HCT116 (cell line): ENCODE measurements at regions of chr6 and their contacts with region 1.

Region 1: GRCh38 chr6:30828027-30828960 is 56.0 kb upstream of the DDR1 start:
- DNase-seq: no peak
- ATAC-seq: peak; percentile 87
- H3K4me3 ChIP-seq: no peak overlapping the region
- H3K27ac ChIP-seq: peak overlapping the region; percentile 22
- H3K4me1 ChIP-seq: peaks cover 23 to 47% of the 10 kb centered on the region in 2 experiments
- H3K27me3 ChIP-seq: no peaks in the 10 kb centered on the region
- CTCF ChIP-seq: peak; percentile 91 to 96 (median 95)
- POLR2A ChIP-seq: no peak
- RAD21 ChIP-seq: peak; percentile 99

Region 2: DNA sequence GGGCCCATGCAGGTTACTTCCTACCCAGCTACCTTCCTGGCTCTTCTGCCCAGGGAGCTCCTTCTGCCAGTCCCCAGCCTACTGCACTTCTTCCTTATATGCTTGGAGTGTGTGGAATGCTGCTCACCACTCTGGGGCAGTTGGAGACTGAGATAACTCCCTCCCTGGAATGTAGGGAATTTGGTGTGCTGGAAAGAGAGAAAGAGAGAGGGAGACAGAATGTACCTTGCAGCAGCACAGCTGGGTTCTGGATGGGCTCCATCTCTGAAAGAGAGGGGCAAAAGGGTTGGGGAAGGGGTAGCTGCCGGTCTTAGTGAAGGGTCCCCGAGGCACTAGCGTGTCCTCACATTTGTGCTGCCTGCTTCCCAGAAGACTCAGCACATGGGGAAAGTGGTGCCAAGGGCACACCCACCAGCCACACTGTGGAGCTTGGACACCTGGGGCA is 15.8 kb after region 1 on chr6:
- CTCF ChIA-PET with region 1: interaction called, 11 read pairs
- POLR2A ChIA-PET with region 1: no interaction called
- RAD21 ChIA-PET with region 1: no interaction called
- intact Hi-C with region 1: no loop called
- DNase-seq: no peak
- ATAC-seq: peak; percentile 75
- H3K4me3 ChIP-seq: peak overlapping the region in 1 of 2 experiments; percentile 36; a peak in 2 of 4 replicates
- H3K27ac ChIP-seq: peak overlapping the region; percentile 35
- H3K4me1 ChIP-seq: peaks cover 43 to 58% of the 10 kb centered on the region in 2 experiments
- H3K27me3 ChIP-seq: no peaks in the 10 kb centered on the region
- CTCF ChIP-seq: no peak
- POLR2A ChIP-seq: no peak
- RAD21 ChIP-seq: peak; percentile 20; the same call in 1 of the 2 replicates

Region 3: DNA sequence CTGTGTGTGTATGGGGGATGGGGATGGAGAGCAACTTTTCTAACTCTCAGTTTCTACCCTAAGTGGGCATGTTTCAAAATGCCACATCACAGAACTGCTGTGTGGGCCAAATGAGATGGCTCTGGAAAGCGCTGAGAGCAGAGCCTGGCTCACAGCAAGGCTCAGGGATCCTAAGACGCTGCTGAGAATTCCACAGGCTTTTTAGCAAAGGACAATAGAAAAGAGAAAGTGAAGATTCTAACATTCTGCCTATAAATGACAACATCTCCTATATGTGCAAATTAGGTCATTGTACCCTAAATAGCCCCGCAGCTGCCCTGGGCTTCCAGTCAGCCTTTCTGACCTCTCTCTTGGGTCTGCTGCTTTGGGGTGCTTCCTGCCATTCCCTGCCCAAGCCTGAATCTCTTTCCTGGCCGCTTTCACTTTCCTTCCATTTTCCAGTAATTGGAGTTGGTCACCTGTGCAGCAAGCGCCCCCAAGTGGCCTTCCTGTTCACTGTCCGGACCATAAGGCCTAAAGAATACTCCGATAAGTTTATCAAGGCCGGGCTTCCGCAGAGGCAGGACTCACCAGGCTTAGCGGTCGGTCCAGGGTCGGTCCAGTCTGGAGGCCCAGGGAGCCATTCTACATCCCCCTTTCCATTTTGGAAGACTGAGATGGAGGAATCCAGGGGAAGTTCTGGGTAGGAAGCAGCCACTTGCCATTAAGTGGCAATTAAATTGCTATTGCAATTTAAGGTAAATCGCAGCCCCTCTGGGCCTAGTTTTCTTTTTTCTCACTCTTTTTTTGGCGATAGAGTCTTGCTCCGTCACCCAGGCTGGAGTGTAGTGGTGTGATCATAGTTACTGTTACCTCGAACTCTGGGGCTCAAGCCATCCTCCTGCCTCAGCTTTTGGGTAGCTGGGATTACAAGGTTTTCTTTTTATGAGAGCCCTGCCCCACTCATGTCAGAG is 49.4 kb after region 1 on chr6:
- CTCF ChIA-PET with region 1: interaction called, 34 read pairs
- POLR2A ChIA-PET with region 1: interaction called, 4 read pairs
- RAD21 ChIA-PET with region 1: interaction called, 3 read pairs
- intact Hi-C with region 1: loop called (anchors 1 kb)
- DNase-seq: peak; percentile 77
- ATAC-seq: peak; percentile 82
- H3K4me3 ChIP-seq: peak overlapping the region; percentile 26 to 41
- H3K27ac ChIP-seq: peak overlapping the region; percentile 44
- H3K4me1 ChIP-seq: peaks cover 39 to 56% of the 10 kb centered on the region in 2 experiments
- H3K27me3 ChIP-seq: no peaks in the 10 kb centered on the region
- CTCF ChIP-seq: peak in 2 of 3 experiments; percentile 92 to 95; a peak in 4 of 6 replicates
- POLR2A ChIP-seq: no peak
- RAD21 ChIP-seq: no peak

Region 4: DNA sequence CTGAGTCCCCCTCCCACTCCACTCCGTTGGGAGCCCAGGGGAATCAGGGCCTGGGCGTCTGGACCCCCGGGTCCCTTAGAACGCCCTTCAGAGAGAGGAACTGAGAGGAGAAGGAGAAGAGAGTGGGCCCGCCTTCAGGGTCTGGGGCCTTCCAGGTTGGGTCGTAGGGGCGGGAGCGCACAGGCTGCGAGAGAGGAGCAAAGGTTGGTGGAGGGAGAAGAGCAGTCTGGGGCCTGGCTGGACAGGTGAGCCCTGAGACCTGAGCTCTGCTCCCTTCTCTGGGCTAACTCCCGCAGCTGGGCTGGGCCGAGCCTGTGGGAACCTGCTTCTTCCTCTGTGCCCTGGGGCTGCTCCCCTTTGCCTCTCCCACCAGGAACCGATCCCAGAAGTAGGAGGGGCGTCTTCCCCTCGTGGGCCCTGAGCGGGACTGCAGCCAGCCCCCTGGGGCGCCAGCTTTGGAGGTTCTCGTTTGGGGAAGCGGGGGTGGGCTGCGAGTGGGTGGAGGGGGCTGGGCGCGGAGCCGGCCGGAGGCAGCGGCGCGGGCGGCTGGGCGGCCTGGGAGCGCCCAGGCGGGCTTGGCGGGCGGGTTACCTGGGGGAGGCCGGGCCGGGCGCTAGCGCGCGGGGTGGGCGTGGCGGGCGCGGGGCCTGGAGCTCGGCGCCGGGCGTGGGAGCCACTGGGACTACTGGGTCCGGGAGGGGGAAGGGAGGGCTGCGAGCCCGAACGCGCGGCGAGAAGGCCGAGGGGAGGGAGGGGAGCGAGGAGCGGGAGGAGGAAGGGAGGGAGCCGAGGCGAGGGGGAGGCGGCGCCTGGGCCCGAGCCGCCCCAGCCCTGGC is 55.6 kb after region 1 on chr6 and contains the start of gene DDR1:
- CTCF ChIA-PET with region 1: interaction called, 34 read pairs
- POLR2A ChIA-PET with region 1: interaction called, 4 read pairs
- RAD21 ChIA-PET with region 1: interaction called in 1 of 2 experiments, 3 read pairs
- intact Hi-C with region 1: no loop called
- DNase-seq: no peak
- ATAC-seq: peak; percentile 30
- H3K4me3 ChIP-seq: peak within 1 kb of the TSS; percentile 83 to 87
- H3K27ac ChIP-seq: peak within 1 kb of the TSS; percentile 99
- H3K4me1 ChIP-seq: peaks cover 50 to 65% of the 10 kb centered on the region in 2 experiments
- H3K27me3 ChIP-seq: no peaks in the 10 kb centered on the region
- CTCF ChIP-seq: no peak
- POLR2A ChIP-seq: no peak
- RAD21 ChIP-seq: no peak
- total RNA-seq, gene DDR1: 211 TPM

Region 5: GRCh38 chr6:31068669-31069340 is 240.5 kb after region 1 on chr6:
- CTCF ChIA-PET with region 1: interaction called, 26 read pairs
- POLR2A ChIA-PET with region 1: interaction called, 4 read pairs
- RAD21 ChIA-PET with region 1: interaction called in 1 of 2 experiments, 3 read pairs
- intact Hi-C with region 1: no loop called
- DNase-seq: peak; percentile 81
- ATAC-seq: peak; percentile 94
- H3K4me3 ChIP-seq: no peak overlapping the region
- H3K27ac ChIP-seq: no peak overlapping the region
- H3K4me1 ChIP-seq: peaks cover 4 to 14% of the 10 kb centered on the region in 2 experiments; a peak in 3 of 4 replicates
- H3K27me3 ChIP-seq: no peaks in the 10 kb centered on the region
- CTCF ChIP-seq: peak; percentile 88 to 92 (median 91)
- POLR2A ChIP-seq: no peak
- RAD21 ChIP-seq: peak; percentile 82

Region 6: GRCh38 chr6:31079656-31080261 is 251.5 kb after region 1 on chr6:
- CTCF ChIA-PET with region 1: interaction called, 28 read pairs
- POLR2A ChIA-PET with region 1: no interaction called
- RAD21 ChIA-PET with region 1: interaction called in 1 of 2 experiments, 4 read pairs
- intact Hi-C with region 1: no loop called
- DNase-seq: peak; percentile 38
- ATAC-seq: peak; percentile 78
- H3K4me3 ChIP-seq: no peak overlapping the region
- H3K27ac ChIP-seq: no peak overlapping the region
- H3K4me1 ChIP-seq: peaks cover 0 to 18% of the 10 kb centered on the region in 2 experiments; a peak in 2 of 4 replicates
- H3K27me3 ChIP-seq: no peaks in the 10 kb centered on the region
- CTCF ChIP-seq: peak; percentile 79 to 90 (median 86)
- POLR2A ChIP-seq: no peak
- RAD21 ChIP-seq: peak; percentile 81

Region 7: DNA sequence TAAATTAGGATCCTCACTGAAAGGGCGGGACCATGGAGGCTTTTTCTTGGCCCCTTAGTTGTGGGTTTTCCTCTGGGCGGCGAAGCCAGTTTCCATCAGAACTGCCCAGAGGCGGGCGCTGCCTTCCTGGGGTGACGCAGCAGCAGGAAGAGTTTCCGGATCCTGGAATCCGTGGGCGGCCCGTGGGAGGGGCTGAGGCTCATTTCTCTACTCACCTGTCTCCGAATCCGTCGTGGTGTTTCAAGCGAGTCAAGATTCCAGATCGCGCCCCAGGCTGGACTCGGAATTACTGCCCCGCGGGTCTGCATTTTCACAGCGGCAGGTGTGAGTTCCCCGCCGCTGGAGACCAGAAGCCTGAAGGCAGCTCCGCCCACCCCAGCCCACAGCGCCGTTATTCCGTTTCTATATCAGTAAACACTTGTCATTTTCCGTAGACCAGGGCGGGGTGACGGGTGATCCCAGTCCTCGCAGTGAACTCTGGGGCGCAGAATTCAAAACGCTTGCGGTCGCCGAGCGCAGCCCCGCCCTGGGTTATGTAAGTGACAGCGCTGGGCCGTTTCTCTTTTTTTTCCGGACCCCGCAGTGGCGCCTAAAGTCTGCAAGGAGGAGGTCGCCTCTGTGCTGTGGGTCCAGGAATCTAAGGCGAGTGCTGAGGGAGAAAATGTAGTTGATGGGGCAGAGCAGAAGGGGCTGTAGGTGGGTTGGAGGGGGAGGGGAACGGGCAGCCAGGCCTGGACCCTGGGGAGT is 369.4 kb after region 1 on chr6:
- CTCF ChIA-PET with region 1: no interaction called
- POLR2A ChIA-PET with region 1: no interaction called
- RAD21 ChIA-PET with region 1: no interaction called
- intact Hi-C with region 1: loop called (anchors 5 kb)
- DNase-seq: peak; percentile 66
- ATAC-seq: peak; percentile 81
- H3K4me3 ChIP-seq: peak overlapping the region; percentile 79 to 88
- H3K27ac ChIP-seq: peak overlapping the region; percentile 95
- H3K4me1 ChIP-seq: peaks cover 12 to 30% of the 10 kb centered on the region in 2 experiments
- H3K27me3 ChIP-seq: no peaks in the 10 kb centered on the region
- CTCF ChIP-seq: no peak
- POLR2A ChIP-seq: peak; percentile 38
- RAD21 ChIP-seq: 0 out of 2 replicates have a peak, but pooled peaks have one; percentile 5